ENCODE measurements at regions of chr6 and their contacts with region 1.

Region 1: DNA sequence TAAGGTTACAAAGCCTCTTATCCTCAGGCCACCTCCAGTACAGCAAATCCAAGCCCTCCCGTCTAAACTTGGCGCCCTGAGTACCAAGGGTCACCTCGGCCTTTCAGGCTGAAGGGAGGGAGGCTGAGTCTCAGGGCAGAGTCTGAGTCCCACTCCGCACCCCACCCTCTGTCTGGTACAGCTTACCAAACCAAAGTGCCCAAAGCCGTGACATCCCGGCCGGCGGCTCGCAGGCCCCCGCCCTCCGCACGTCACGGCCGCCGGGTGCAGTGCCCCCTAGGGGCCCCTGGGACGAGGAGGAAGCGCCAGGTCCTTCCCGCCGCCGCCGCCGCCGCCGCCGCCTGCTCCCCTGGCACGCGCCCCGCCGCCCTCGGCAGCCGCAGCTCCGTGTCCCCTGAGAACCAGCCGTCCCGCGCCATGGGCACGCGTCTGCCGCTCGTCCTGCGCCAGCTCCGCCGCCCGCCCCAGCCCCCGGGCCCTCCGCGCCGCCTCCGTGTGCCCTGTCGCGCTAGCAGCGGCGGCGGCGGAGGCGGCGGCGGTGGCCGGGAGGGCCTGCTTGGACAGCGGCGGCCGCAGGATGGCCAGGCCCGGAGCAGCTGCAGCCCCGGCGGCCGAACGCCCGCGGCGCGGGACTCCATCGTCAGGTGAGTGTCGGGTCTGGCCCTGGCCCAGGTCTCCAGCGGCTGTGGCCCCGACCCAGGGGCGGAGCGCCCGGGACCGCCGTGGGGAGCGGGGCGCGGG is at the start of gene MTHFD1L:
- DNase-seq: peak; percentile 89
- ATAC-seq: peak; percentile 74
- H3K4me3 Mint-ChIP-seq: peak within 1 kb of the TSS; percentile 81
- H3K27ac Mint-ChIP-seq: peak within 1 kb of the TSS; percentile 94
- H3K4me1 Mint-ChIP-seq: peaks cover 38% of the 10 kb centered on the region
- H3K27me3 Mint-ChIP-seq: peaks cover 12% of the 10 kb centered on the region
- total RNA-seq, gene MTHFD1L: 103 to 129 TPM

Region 2: GRCh38 chr6:150987371-150987828 is 121.8 kb after region 1 on chr6:
- CTCF ChIA-PET with region 1: no interaction called
- POLR2A ChIA-PET with region 1: no interaction called
- intact Hi-C with region 1: loop called in 1 of 2 experiments (anchors 2 kb)
- DNase-seq: peak; percentile 75
- ATAC-seq: peak; percentile 95
- H3K4me3 Mint-ChIP-seq: peak overlapping the region; percentile 32
- H3K27ac Mint-ChIP-seq: peak overlapping the region; percentile 94
- H3K4me1 Mint-ChIP-seq: peaks cover 15% of the 10 kb centered on the region
- H3K27me3 Mint-ChIP-seq: no peaks in the 10 kb centered on the region